Heart left ventricle (tissue), 16 donors: ENCODE measurements at regions of chr5 and their contacts with region 1.

Region 1: GRCh38 chr5:31638748-31639418 is at the start of gene PDZD2:
- DNase-seq: peak; percentile 88 to 92 (median 91)
- ATAC-seq: peak; percentile 72 to 86 (median 82)
- H3K4me3 ChIP-seq: peak within 1 kb of the TSS; percentile 66 to 93 (median 77)
- H3K27ac ChIP-seq: peak within 1 kb of the TSS; percentile 48 to 91 (median 80)
- H3K4me1 ChIP-seq: peaks cover 3 to 72% (median 30%) of the 10 kb centered on the region in 12 donors
- H3K27me3 ChIP-seq: peaks cover 0 to 7% (median 0%) of the 10 kb centered on the region in 9 donors
- CTCF ChIP-seq: peak; percentile 16 to 59 (median 32)
- POLR2A ChIP-seq: peak in 1 of 2 donors; percentile 64
- total RNA-seq, gene PDZD2: 41.3 to 116 (median 82.9) TPM

Region 2: DNA sequence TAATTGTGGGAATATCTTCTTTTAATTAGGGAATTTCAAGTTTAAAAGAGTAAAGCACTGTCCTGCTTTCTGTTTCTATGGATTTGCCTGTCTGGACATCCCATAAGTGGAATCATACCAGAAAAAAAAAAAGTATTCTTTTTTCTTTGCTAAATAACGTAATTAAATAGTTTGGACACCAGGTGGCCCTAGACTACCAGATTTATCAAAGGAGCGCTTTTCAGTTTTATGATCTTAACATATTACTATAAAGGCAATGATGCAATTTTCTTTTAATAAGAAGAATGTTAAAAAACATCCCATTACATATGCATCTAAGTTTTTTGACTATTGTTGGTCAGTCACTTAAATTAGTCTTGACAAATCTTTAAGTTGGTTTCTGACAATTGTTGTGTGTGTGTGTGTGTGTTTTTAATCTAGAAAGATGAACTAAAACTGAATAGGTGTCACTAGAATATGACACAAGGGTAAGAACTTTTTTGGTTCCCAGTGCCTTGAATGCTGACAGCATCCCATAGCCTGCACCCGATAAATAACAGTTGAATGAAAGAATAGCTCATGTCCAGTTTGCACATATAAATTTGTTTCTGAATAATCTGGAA is 57.3 kb before region 1 on chr5:
- intact Hi-C with region 1: loop called in 2 of 10 experiments (anchors 1 to 10 kb)
- DNase-seq: no peak
- ATAC-seq: peak in 1 of 4 donors; percentile 39
- H3K4me3 ChIP-seq: no peak overlapping the region
- H3K27ac ChIP-seq: no peak overlapping the region
- H3K4me1 ChIP-seq: no peaks in the 10 kb centered on the region
- H3K27me3 ChIP-seq: no peaks in the 10 kb centered on the region
- CTCF ChIP-seq: peak; percentile 39 to 79 (median 63)
- POLR2A ChIP-seq: no peak

Region 3: DNA sequence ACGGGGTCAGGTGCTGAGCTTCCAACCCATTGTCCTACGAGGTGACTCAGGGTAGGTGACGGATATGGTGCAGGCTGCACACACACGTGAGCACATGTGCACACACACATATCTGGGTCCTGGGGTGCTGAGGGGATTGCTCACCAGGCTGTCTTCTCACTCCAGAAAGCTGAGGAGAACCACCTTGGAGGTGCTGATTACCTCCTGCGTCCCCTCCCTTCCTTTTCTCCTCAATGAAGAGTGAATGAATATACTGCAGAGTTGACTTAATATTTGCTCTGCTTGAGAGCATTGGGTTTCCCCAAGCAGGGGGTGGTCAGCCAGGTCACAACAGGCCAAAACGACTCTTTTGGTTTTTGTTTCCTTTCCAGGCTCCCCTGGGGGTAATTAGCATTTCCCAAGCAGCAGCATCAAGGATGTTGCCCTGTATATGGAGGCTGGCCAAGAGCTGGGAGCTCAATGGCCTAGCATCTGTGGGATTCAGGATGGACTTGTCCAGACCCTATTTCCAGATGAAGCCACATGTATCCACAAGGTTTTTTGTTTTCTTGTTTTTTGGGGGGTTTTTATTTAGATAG is 49.7 kb after region 1 on chr5:
- intact Hi-C with region 1: loop called in 1 of 10 experiments (anchors 5 kb)
- DNase-seq: peak in 4 of 5 donors; percentile 51 to 64 (median 55)
- ATAC-seq: no peak
- H3K4me3 ChIP-seq: no peak overlapping the region
- H3K27ac ChIP-seq: peak overlapping the region in 3 of 12 donors; percentile 9 to 33 (median 18)
- H3K4me1 ChIP-seq: peaks cover 0 to 42% (median 14%) of the 10 kb centered on the region in 12 donors
- H3K27me3 ChIP-seq: no peaks in the 10 kb centered on the region
- CTCF ChIP-seq: no peak
- POLR2A ChIP-seq: no peak

Region 4: DNA sequence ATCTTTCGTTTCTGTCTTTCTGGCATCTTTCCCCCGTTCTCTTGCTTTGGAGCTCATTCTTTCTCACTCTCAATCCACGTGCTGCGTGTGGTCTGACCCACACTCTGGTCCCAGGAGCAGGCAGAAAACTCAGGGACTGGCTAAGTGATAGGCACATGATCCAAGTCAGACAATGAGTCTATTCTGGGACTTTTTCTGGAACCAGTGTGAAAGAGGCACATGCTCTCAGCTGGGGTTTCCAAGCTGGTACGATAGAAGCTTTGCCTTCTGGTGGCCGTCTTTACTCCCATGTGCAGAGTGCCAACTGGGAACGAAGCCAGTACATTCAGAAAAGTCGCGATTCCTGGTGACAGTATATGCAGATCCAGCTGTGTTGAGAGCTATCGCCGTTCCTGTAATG is 94.5 kb after region 1 on chr5:
- intact Hi-C with region 1: loop called in 3 of 10 experiments (anchors 5 to 10 kb)
- DNase-seq: peak in 4 of 5 donors; percentile 34 to 64 (median 44)
- ATAC-seq: peak; percentile 63 to 88 (median 84)
- H3K4me3 ChIP-seq: no peak overlapping the region
- H3K27ac ChIP-seq: peak overlapping the region in 10 of 12 donors; percentile 31 to 72 (median 52)
- H3K4me1 ChIP-seq: peaks cover 0 to 65% (median 27%) of the 10 kb centered on the region in 12 donors
- H3K27me3 ChIP-seq: no peaks in the 10 kb centered on the region
- CTCF ChIP-seq: no peak
- POLR2A ChIP-seq: no peak

Region 5: GRCh38 chr5:31809050-31809870 is 170.4 kb after region 1 on chr5:
- intact Hi-C with region 1: loop called in 7 of 10 experiments (anchors 1 to 10 kb)
- DNase-seq: peak; percentile 71 to 83 (median 74)
- ATAC-seq: peak; percentile 84 to 94 (median 90)
- H3K4me3 ChIP-seq: no peak overlapping the region
- H3K27ac ChIP-seq: no peak overlapping the region
- H3K4me1 ChIP-seq: peaks cover 0 to 22% (median 2%) of the 10 kb centered on the region in 12 donors
- H3K27me3 ChIP-seq: no peaks in the 10 kb centered on the region
- CTCF ChIP-seq: peak; percentile 67 to 89 (median 80)
- POLR2A ChIP-seq: no peak